HCT116 (cell line): ENCODE measurements at regions of chr3 and their contacts with region 1.

Region 1: DNA sequence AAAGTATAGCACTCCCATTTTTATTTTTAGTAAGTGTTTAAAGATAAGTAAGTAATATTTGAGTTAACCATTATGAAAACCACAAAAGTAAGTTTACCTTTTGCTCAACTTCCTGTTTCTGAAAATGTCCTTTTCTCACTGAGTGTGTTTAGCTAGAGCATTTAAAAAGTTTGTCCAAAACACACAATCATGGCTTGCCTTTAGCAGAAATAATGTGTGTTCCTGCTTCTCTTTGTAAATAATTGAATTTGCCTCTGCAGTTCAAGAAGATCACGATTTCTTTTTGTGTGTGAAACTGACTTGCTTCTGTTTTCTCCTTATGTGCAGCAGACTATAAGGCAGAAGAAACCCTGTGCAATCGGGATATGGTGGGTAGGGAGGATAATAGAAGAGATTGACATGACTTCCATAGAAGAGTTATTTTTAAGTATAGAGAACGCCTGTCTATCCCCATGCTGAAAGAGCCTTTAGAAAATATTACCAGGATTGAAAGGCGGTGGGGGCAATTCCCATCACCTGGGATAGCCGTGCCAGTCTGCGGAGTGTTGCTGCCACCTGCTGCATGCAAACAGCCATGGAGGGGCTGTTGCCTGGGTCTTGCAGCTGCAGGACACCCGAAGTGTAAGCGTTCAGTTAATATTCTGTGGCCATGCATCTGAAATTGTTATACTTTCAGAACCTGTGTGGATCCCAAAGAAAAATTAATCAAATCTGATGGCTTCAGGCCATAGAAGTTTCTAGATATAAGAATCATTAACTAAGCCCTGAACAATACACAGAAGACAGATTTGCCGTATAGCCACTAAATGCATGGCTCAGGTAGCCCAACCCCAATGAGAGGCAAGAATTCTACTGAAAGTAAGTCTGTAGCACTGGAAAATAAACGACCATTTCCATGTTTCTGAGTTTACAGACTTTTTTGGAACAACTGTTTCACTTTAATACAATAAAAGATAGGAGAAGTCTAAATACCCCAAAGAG is 2.4 kb upstream of the CD96 start:
- DNase-seq: peak; percentile 52
- ATAC-seq: peak; percentile 100
- H3K4me3 ChIP-seq: no peak overlapping the region
- H3K27ac ChIP-seq: no peak overlapping the region
- H3K4me1 ChIP-seq: peaks cover 11 to 26% of the 10 kb centered on the region in 2 experiments; a peak in 3 of 4 replicates
- H3K27me3 ChIP-seq: no peaks in the 10 kb centered on the region
- CTCF ChIP-seq: peak; percentile 75 to 95 (median 93)
- POLR2A ChIP-seq: no peak
- RAD21 ChIP-seq: peak; percentile 97

Region 2: DNA sequence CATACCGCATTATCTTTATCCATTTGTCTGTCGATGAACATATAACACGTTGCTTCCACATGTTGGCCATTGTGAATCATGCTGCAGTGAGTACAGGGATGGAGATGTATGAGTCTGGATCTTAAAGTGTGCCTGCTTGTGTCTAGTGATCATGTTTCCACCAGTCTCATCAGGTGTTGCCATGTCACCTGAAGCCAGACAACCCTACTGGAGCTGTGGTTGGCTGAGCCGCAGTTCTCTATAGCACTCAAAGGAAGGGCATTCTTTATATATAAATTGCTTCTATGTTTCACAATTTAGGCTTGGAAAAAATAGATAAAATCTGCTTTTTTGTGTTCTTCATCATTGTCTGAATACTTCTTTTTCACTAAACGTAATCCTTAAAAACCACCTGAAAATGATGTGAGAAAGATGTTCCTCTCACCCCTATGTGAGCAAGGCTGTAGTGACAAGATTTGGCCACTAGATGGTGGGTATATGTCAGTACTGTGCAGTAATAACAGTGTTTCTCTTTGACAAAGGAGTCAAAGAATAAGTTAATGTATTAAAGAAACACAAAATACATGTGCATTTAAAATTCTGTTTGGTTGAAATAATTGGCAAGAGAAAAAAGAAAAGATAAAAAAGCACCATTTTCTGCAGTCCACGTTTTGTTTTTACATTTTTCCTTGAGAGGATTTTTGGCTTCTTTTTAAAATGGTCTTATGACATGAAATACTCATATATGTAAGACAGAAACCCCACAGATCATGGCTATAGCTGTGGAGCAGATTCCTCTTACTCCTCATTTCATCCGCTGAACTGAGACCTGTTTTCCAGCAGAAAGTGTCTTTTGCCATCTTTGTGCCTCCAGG is 1807.8 kb before region 1 on chr3:
- CTCF ChIA-PET with region 1: no interaction called
- POLR2A ChIA-PET with region 1: no interaction called
- RAD21 ChIA-PET with region 1: no interaction called
- intact Hi-C with region 1: loop called (anchors 1 kb)
- DNase-seq: peak; percentile 29
- ATAC-seq: peak; percentile 85; the same call in 1 of the 2 replicates
- H3K4me3 ChIP-seq: no peak overlapping the region
- H3K27ac ChIP-seq: no peak overlapping the region
- H3K4me1 ChIP-seq: peaks cover 0 to 12% of the 10 kb centered on the region in 2 experiments; a peak in 2 of 4 replicates
- H3K27me3 ChIP-seq: no peaks in the 10 kb centered on the region
- CTCF ChIP-seq: peak; percentile 51 to 91 (median 85); a peak in 5 of 6 replicates
- POLR2A ChIP-seq: no peak
- RAD21 ChIP-seq: peak; percentile 86

Region 3: DNA sequence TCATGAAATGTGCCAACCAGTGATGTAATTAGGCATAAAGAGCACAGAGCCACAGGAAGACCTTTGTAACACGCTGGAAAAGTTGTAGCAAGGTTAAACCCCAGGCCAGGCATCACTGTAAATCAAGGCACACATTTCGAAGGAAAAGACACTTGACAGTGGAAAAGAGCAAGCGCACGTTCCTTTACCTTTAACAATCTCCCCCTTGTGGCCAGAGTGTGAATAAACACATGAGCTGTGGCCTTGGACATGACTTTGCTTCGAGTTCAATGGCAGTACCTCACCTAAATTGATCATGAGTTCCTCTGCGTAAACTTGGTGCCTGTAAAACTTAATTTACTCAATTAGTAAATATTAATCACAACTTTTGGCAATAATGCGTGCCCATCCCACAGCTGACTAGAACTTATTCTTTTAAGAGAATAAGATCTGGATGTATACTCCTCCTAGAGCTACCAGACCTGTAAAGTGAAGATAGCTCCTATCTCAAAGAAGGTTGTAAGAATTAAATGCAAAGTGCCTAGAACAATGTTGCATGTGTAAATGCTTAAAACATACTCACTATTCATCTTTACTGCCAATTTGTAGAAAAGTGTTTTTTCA is 1225.0 kb before region 1 on chr3:
- CTCF ChIA-PET with region 1: no interaction called
- POLR2A ChIA-PET with region 1: no interaction called
- RAD21 ChIA-PET with region 1: no interaction called
- intact Hi-C with region 1: loop called (anchors 10 kb)
- DNase-seq: peak; percentile 72
- ATAC-seq: peak; percentile 88
- H3K4me3 ChIP-seq: no peak overlapping the region
- H3K27ac ChIP-seq: no peak overlapping the region
- H3K4me1 ChIP-seq: peaks cover 0 to 8% of the 10 kb centered on the region in 2 experiments; a peak in 1 of 4 replicates
- H3K27me3 ChIP-seq: no peaks in the 10 kb centered on the region
- CTCF ChIP-seq: peak; percentile 36 to 75 (median 74); a peak in 5 of 6 replicates
- POLR2A ChIP-seq: no peak
- RAD21 ChIP-seq: peak; percentile 67

Region 4: GRCh38 chr3:111012388-111013248 is 527.0 kb before region 1 on chr3:
- CTCF ChIA-PET with region 1: no interaction called
- POLR2A ChIA-PET with region 1: no interaction called
- RAD21 ChIA-PET with region 1: no interaction called
- intact Hi-C with region 1: loop called (anchors 1 kb)
- DNase-seq: peak; percentile 39
- ATAC-seq: peak; percentile 100
- H3K4me3 ChIP-seq: no peak overlapping the region
- H3K27ac ChIP-seq: no peak overlapping the region
- H3K4me1 ChIP-seq: 0 out of 4 replicates have a peak, but pooled peaks cover 0 to 6% of the 10 kb centered on the region in 2 experiments
- H3K27me3 ChIP-seq: no peaks in the 10 kb centered on the region
- CTCF ChIP-seq: peak; percentile 39 to 58 (median 49); a peak in 5 of 6 replicates
- POLR2A ChIP-seq: no peak
- RAD21 ChIP-seq: peak; percentile 79

Region 5: DNA sequence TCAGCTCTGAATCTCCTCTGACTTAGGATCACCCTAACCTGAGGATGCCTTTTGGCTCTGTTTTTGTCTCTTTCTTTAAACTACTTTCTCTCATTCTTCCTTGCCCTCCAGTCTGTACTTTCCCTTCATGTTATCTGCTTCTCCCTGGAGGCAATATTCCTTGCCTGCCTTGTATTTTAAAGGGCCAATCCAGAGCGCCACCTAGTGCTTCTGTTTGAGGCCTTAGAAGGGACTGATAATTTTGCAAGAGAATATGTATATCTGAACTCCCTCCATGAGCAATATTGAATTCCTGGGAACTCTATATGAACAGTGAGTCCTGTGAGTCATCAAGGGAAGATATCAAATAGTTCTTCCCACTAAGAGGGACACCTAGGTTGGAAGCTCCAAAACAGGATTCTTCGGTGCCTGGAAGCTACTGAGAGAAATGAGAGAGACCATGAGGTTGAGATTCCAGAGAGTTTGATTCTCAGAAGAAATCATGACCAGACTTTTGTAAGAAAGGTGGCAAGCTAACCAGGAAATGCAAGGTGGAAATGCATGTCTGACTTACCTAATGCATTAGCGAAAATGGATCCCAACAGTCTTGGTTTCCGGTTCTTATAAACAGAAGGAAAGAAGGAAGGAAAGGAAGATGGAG is 201.5 kb before region 1 on chr3:
- CTCF ChIA-PET with region 1: no interaction called
- POLR2A ChIA-PET with region 1: no interaction called
- RAD21 ChIA-PET with region 1: no interaction called
- intact Hi-C with region 1: loop called (anchors 1 kb)
- DNase-seq: peak; percentile 66
- ATAC-seq: peak; percentile 95
- H3K4me3 ChIP-seq: no peak overlapping the region
- H3K27ac ChIP-seq: no peak overlapping the region
- H3K4me1 ChIP-seq: peaks cover 0 to 18% of the 10 kb centered on the region in 2 experiments; a peak in 2 of 4 replicates
- H3K27me3 ChIP-seq: no peaks in the 10 kb centered on the region
- CTCF ChIP-seq: peak; percentile 72 to 92 (median 83); a peak in 5 of 6 replicates
- POLR2A ChIP-seq: no peak
- RAD21 ChIP-seq: peak; percentile 92